ENCODE measurements at regions of chr1 and their contacts with region 1.

Region 1: GRCh38 chr1:5745776-5746610 is 246.2 kb downstream of the NPHP4 start:
- DNase-seq: peak; percentile 76

Region 2: DNA sequence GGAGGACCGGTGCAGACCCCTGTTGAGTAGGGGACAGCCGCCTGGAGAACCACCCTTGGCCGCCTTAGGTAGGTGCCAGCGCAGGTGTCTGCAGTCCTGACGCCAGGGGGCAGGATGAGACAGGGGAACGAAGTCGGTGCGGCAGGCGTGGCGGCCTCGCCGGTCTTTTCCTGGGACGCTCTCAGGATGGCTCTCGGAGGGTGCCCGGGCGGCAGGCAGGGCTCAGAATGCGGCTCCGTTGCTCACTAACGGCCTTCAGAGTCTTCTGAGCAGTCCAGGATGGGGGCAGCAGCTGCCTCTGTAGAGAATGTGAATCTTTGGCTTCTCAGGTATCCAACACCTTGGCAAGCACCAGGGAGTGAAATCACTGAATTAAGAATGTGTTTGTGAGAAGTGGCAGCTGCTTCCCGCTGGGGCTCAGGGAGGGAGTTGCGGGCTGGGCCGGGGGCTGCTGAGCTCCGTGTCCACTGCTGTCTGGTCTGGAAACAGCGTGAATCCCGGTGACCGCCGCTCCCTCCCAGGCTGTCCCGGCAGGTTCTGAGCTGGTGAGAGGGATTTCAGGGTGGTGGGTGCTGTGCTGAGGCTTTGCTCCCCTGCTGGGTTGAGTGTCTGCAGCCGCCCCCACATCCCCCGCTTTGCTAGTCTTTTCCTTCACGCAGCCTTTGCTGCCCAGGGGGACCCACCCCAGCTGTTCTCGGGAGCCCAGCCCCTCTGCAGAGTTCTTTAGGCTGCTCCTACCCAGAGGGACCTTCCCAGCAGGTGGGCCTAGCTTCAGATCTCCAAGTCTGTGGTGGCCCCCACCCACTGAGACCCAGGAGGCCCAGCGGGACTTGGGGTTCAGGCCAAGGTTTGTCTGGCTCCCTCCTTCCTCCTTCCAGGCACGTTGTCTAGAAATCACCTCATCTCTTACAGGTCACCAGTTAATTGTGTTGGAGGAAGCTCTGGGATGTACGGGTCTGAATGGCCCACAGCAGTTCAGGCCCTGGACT is 1834.8 kb before region 1 on chr1:
- intact Hi-C with region 1: loop called (anchors 5 kb)
- DNase-seq: peak; percentile 80

Region 3: GRCh38 chr1:4652631-4653327 is 1093.2 kb before region 1 on chr1:
- intact Hi-C with region 1: loop called (anchors 10 kb)
- DNase-seq: no peak

Region 4: GRCh38 chr1:5514519-5515183 is 231.3 kb before region 1 on chr1:
- intact Hi-C with region 1: loop called (anchors 2 kb)
- DNase-seq: peak; percentile 87

Region 5: GRCh38 chr1:5637171-5637570 is 108.8 kb before region 1 on chr1:
- intact Hi-C with region 1: loop called (anchors 5 kb)
- DNase-seq: no peak

Region 6: GRCh38 chr1:5688081-5689077 is 57.6 kb before region 1 on chr1:
- intact Hi-C with region 1: no loop called
- DNase-seq: no peak